Activated CD4-positive, alpha-beta memory T cell treated with anti-CD3 and anti-CD28 coated beads, Interleukin-2, amount 10 ng/mL, durations not matched to agents 7 days and 5 days (primary cell): ENCODE measurements at regions of chr2 and their contacts with region 1.

Region 1: GRCh38 chr2:85707304-85707703 is 13.1 kb downstream of the GNLY start:
- DNase-seq: peak; percentile 75
- H3K4me3 Mint-ChIP-seq: no peak overlapping the region
- H3K27ac Mint-ChIP-seq: peak overlapping the region; percentile 86
- H3K4me1 Mint-ChIP-seq: peaks cover 80% of the 10 kb centered on the region
- H3K27me3 Mint-ChIP-seq: peaks cover 5% of the 10 kb centered on the region

Region 2: GRCh38 chr2:85648619-85649018 is 58.7 kb before region 1 on chr2:
- CTCF ChIA-PET with region 1: interaction called, 12 read pairs
- POLR2A ChIA-PET with region 1: no interaction called
- DNase-seq: peak; percentile 34
- H3K4me3 Mint-ChIP-seq: no peak overlapping the region
- H3K27ac Mint-ChIP-seq: peak overlapping the region; percentile 34
- H3K4me1 Mint-ChIP-seq: peaks cover 6% of the 10 kb centered on the region
- H3K27me3 Mint-ChIP-seq: no peaks in the 10 kb centered on the region

Region 3: GRCh38 chr2:85694052-85695025 is 13.0 kb before region 1 on chr2 and contains the start of gene GNLY:
- CTCF ChIA-PET with region 1: interaction called, 21 read pairs
- POLR2A ChIA-PET with region 1: interaction called, 9 read pairs
- DNase-seq: peak; percentile 30
- H3K4me3 Mint-ChIP-seq: peak within 1 kb of the TSS; percentile 53
- H3K27ac Mint-ChIP-seq: peak within 1 kb of the TSS; percentile 70
- H3K4me1 Mint-ChIP-seq: peaks cover 42% of the 10 kb centered on the region
- H3K27me3 Mint-ChIP-seq: peaks cover 4% of the 10 kb centered on the region
- total RNA-seq, gene GNLY: 569 to 599 TPM